Posterior vena cava (tissue), 2 donors: ENCODE measurements at regions of chr19 and their contacts with region 1.

Region 1: GRCh38 chr19:5321851-5322681 is 18.5 kb downstream of the PTPRS start:
- DNase-seq: no peak

Region 2: DNA sequence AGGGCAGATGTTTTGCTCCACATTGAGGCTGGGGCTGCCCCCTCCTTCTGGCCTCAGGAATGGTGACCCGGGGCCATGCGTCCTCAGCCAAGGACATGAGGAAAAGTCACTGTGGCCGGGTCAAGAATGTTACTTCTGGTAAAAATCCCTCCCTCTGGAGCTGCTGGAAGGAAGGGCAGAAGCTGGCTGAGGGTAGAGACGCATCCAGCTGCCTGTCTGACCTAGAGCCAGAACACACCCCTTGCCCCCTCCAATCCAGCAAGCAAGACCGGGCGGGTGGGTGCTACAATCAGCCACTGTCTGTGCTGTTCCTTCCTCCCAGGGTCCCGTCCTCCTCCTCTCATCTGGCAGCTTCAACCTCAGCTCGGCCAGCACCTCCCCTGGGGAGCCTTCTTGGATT is 40.5 kb before region 1 on chr19:
- intact Hi-C with region 1: no loop called
- DNase-seq: peak; percentile 94

Region 3: GRCh38 chr19:5334824-5335500 is 12.9 kb after region 1 on chr19:
- intact Hi-C with region 1: loop called in 1 of 2 experiments (anchors 1 kb)
- DNase-seq: no peak